ENCODE measurements at regions of chr15 and their contacts with region 1.

Region 1: DNA sequence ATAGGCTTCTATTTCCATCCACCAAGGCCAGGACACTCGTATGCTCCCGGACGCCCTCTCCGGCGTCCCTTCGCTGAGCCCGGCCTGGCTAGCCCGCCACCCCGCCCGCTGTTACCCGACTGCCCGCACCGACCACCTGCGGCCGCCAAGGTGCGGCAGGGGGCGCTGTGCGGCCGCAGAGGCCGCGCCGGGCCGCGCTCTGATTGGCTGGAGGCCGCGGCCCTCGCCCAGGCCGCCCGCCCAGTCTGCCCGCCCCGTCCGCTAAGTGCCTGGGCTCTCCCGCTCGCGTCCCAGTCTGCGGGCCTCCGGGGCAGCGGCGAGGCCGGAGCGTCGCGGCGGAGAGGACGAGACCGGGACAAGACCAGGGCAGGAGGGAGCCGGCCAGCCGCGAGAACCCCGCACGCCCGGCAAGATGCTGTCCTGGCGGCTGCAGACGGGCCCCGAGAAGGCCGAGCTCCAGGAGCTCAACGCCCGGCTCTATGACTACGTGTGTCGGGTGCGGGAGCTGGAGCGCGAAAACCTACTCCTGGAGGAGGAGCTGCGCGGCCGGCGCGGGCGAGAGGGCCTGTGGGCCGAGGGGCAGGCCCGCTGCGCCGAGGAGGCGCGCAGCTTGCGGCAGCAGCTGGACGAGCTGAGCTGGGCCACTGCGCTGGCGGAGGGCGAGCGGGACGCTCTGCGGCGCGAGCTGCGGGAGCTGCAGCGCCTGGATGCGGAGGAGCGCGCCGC is at the start of gene SYNM:
- DNase-seq: peak; percentile 43 to 91 (median 80)

Region 2: DNA sequence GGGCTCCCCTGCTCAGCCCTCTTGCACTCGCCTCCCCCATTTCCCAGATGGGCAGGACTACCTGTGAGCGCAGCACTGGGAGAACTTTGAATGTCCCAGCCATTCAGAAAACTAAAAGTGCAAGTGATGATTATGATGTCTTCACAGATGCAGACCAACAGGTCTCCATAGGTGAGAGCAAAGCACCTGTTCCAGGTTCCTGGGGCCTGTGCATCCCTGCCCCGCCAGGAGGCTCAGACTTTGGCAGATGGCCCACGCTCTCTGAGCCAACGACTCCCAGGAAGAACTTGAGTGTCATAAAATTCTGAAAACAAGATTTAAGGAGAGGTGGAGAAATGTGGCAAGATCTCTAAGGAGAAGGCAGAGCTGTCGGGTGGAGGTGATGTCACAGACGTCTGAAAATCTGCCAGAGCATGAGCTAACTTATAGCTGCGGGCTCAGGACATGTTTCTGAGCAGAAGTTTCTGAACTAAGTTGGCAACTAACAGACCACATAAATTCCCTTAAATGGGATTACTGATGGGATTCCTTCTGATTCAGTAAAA is 567.4 kb before region 1 on chr15:
- intact Hi-C with region 1: no loop called
- DNase-seq: peak in 17 of 42 donors; percentile 7 to 62 (median 25)

Region 3: GRCh38 chr15:98865397-98866339 is 239.3 kb before region 1 on chr15:
- intact Hi-C with region 1: no loop called
- DNase-seq: peak; percentile 39 to 90 (median 76)

Region 4: GRCh38 chr15:99213187-99213811 is 108.3 kb after region 1 on chr15:
- intact Hi-C with region 1: loop called (anchors 5 kb)
- DNase-seq: peak; percentile 75 to 95 (median 87)